Activated CD4-positive, alpha-beta memory T cell treated with anti-CD3 and anti-CD28 coated beads for 36 hours (primary cell): ENCODE measurements at regions of chr14 and their contacts with region 1.

Region 1: DNA sequence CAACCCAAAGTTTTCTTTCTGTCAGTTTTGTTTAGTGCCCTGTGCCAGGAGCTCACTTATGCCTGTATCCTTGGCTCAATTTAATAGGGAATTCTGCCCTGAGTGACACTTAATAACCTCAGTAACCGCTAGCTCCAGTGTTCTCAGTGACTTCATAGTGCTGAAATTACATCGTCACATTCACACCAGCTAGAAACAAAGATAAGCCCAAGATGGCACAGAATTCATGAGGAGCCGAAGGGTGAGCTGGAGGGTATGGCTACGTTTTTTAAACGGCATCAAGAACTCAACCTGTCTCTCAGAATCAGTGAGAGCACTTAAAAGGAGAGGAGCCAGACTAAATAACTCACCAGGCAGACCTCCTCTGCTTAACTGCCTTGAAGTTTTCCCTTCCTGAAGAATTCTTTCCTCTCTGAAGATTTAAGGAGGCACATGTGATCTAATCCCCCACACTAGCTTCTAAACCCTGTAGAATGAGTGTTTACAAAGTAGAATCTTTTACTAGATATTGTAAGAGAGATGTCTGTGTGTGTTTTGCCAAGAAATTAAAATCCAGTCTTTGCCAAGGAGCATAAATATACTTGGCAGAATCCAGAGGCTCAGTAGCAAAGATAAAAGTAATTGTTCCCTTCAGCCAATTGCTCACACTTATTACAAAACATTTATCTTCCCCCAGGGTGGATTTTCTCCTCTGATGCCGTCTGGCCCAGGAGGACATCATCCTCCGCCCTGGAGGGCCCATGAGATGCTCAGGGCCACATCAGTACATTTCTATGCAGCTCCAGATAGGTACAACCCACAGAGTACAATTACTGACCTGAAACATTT is 37.3 kb downstream of the PTGER2 start:
- DNase-seq: no peak
- H3K4me3 Mint-ChIP-seq: peak overlapping the region; percentile 42
- H3K27ac Mint-ChIP-seq: peak overlapping the region; percentile 84
- H3K4me1 Mint-ChIP-seq: peaks cover 66% of the 10 kb centered on the region
- H3K27me3 Mint-ChIP-seq: no peaks in the 10 kb centered on the region

Region 2: DNA sequence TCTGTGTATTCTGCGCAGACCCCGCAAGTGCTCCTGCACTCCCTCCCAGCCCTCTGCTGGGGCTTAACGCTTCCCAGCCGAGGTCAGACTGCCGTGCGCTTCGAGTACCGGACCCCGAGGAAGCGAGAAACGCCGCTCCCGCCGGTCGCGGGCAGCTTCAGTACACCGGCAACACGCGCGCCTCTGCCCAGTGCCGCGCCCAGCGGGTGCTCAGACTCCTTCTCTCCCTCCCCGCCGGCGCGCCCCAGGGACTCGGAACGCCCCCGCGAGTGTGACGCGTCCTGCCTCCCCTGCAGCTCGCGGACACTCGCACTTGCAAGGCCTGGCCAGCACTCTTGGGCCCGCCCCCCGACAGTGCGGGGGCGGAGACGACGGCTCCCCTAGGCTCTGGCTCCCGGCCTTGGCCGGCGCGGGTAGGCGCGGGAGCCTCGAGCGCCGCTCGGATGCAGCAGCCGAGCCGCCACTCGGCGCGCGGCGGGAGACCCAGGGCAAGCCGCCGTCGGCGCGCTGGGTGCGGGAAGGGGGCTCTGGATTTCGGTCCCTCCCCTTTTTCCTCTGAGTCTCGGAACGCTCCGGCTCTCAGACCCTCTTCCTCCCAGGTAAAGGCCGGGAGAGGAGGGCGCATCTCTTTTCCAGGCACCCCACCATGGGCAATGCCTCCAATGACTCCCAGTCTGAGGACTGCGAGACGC is 37.4 kb before region 1 on chr14 and contains the start of gene PTGER2:
- CTCF ChIA-PET with region 1: interaction called, 4 read pairs
- POLR2A ChIA-PET with region 1: interaction called, 11 read pairs
- intact Hi-C with region 1: loop called (anchors 1 kb)
- DNase-seq: peak; percentile 90
- H3K4me3 Mint-ChIP-seq: peak within 1 kb of the TSS; percentile 97
- H3K27ac Mint-ChIP-seq: peak within 1 kb of the TSS; percentile 90
- H3K4me1 Mint-ChIP-seq: peaks cover 69% of the 10 kb centered on the region
- H3K27me3 Mint-ChIP-seq: peaks cover 6% of the 10 kb centered on the region
- total RNA-seq, gene PTGER2: 10.7 to 12.9 TPM

Region 3: GRCh38 chr14:52402812-52403526 is 51.5 kb after region 1 on chr14:
- CTCF ChIA-PET with region 1: interaction called, 4 read pairs
- POLR2A ChIA-PET with region 1: no interaction called
- intact Hi-C with region 1: loop called (anchors 1 kb)
- DNase-seq: peak; percentile 51
- H3K4me3 Mint-ChIP-seq: no peak overlapping the region
- H3K27ac Mint-ChIP-seq: peak overlapping the region; percentile 16
- H3K4me1 Mint-ChIP-seq: peaks cover 59% of the 10 kb centered on the region
- H3K27me3 Mint-ChIP-seq: peaks cover 15% of the 10 kb centered on the region

Region 4: GRCh38 chr14:52413729-52414408 is 62.4 kb after region 1 on chr14:
- CTCF ChIA-PET with region 1: no interaction called
- POLR2A ChIA-PET with region 1: no interaction called
- intact Hi-C with region 1: loop called (anchors 2 kb)
- DNase-seq: no peak
- H3K4me3 Mint-ChIP-seq: peak overlapping the region; percentile 4
- H3K27ac Mint-ChIP-seq: peak overlapping the region; percentile 69
- H3K4me1 Mint-ChIP-seq: peaks cover 49% of the 10 kb centered on the region
- H3K27me3 Mint-ChIP-seq: no peaks in the 10 kb centered on the region